Activated naive CD4-positive, alpha-beta T cell treated with anti-CD3 and anti-CD28 coated beads for 36 hours (primary cell): ENCODE measurements at regions of chr3 and their contacts with region 1.

Region 1: DNA sequence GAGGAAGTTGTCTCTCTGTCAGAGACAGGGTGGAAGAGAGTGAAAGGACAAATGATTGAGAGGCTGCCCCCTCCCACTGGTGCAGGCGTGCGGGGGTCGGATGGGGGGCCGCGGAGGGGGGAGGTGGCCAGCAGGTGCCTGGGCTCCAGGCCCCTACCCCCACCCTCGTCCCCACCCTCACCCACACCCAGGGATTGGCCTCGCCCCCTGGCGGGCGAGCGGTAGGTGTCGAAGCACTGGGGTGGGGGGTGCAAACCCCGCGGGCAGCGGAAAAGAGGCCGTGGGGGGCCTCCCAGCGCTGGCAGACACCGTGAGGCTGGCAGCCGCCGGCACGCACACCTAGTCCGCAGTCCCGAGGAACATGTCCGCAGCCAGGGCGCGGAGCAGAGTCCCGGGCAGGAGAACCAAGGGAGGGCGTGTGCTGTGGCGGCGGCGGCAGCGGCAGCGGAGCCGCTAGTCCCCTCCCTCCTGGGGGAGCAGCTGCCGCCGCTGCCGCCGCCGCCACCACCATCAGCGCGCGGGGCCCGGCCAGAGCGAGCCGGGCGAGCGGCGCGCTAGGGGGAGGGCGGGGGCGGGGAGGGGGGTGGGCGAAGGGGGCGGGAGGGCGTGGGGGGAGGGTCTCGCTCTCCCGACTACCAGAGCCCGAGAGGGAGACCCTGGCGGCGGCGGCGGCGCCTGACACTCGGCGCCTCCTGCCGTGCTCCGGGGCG is at the start of gene KAT2B:
- DNase-seq: peak; percentile 87
- H3K4me3 Mint-ChIP-seq: peak within 1 kb of the TSS; percentile 95
- H3K27ac Mint-ChIP-seq: peak within 1 kb of the TSS; percentile 92
- H3K4me1 Mint-ChIP-seq: peaks cover 42% of the 10 kb centered on the region
- H3K27me3 Mint-ChIP-seq: no peaks in the 10 kb centered on the region
- total RNA-seq, gene KAT2B: 9.4 to 11.5 TPM

Region 2: DNA sequence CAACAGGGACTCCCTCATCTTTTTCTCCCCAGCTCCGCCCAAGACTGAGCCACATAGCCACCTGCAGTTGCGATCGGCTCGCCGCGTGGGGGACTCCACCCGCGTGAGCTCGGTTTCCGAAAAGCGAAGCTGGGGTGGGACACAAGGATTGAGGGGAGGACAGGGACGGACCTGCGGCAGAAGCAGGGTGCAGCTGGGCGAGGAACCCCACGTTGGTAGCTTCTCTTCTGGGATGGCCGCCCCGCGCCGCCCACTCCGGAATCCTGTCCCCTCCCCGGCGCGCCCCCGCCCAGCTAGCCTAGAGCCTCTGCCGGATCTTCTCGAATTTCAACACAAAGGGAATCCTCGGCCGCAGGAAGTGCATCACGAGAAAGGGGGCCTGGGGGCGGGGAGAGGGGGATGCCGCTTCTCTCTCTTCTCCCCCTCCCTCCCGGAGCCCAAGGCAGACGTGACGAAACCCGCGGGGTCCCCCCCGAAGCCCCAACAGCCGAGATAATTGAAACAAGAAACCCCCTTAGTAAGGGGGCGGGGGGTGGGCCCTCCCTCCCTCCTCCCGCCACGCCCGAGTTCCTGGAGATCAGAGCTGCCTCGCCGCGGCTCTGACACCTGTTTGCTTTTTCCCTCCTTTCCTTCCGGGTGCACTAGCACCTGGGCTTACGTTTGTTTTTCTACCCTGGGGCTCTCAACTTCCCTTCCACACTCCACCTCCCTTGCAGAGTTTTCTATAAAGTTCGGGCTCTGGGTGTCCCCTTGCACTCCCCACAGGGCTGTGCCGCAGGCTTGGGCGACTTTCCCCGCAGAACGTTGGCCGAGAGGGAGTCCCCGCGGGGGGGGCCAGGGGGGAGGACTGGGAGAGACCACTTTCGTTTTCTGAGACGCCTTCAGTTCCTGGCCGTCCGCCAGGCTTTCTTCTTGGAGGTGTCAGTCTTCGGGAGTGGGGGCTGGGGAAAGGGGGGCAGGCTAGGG is 893.0 kb before region 1 on chr3:
- CTCF ChIA-PET with region 1: no interaction called
- intact Hi-C with region 1: loop called (anchors 2 kb)
- DNase-seq: peak; percentile 78
- H3K4me3 Mint-ChIP-seq: peak overlapping the region; percentile 81
- H3K27ac Mint-ChIP-seq: peak overlapping the region; percentile 54
- H3K4me1 Mint-ChIP-seq: peaks cover 15% of the 10 kb centered on the region
- H3K27me3 Mint-ChIP-seq: peaks cover 34% of the 10 kb centered on the region

Region 3: GRCh38 chr3:19885468-19885867 is 154.5 kb before region 1 on chr3:
- CTCF ChIA-PET with region 1: interaction called, 3 read pairs
- intact Hi-C with region 1: loop called (anchors 1 kb)
- DNase-seq: no peak
- H3K4me3 Mint-ChIP-seq: no peak overlapping the region
- H3K27ac Mint-ChIP-seq: no peak overlapping the region
- H3K4me1 Mint-ChIP-seq: no peaks in the 10 kb centered on the region
- H3K27me3 Mint-ChIP-seq: no peaks in the 10 kb centered on the region

Region 4: DNA sequence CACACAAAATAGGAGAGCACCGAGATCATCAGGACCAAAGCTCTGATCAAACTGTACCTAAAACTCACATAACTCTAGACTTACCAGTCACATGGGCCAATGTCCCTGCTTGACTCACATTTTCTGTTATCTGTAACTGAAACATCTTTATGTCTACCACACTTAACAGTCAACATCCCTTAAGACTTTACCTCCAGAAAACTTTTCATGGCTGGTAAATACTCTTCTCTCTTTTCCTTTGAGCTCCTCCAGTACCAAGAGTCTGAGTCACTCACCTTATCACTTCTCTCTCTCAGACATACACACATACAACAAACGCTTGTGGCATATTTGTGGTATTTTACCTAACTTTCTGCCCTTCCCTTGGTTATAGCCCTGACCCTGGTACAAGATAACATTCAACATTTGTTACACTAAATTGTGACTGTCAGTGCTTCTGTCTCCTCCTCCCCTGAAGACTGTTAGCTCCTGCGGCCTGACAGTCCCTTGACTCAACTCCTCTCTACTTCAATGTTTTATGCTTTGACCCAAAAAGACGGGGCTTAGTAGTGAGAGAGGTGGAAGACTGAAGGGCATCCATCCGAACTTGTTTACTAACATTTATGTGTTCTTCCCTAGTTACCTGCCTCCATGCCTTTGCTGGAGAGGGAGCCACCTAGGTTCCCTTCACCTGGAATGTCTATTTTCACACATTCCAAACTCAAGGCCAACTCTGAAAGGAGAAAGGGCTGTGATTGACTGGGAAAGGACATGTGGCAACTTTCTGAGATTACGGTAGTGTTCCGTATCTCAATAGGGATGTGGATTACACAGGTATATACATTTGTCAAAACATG is 102.2 kb before region 1 on chr3:
- CTCF ChIA-PET with region 1: no interaction called
- intact Hi-C with region 1: loop called (anchors 2 kb)
- DNase-seq: peak; percentile 31
- H3K4me3 Mint-ChIP-seq: no peak overlapping the region
- H3K27ac Mint-ChIP-seq: peak overlapping the region; percentile 63
- H3K4me1 Mint-ChIP-seq: peaks cover 13% of the 10 kb centered on the region
- H3K27me3 Mint-ChIP-seq: peaks cover 6% of the 10 kb centered on the region

Region 5: GRCh38 chr3:20054549-20054987 is 14.6 kb after region 1 on chr3:
- CTCF ChIA-PET with region 1: interaction called, 9 read pairs
- intact Hi-C with region 1: loop called (anchors 1 kb)
- DNase-seq: peak; percentile 84
- H3K4me3 Mint-ChIP-seq: no peak overlapping the region
- H3K27ac Mint-ChIP-seq: no peak overlapping the region
- H3K4me1 Mint-ChIP-seq: peaks cover 23% of the 10 kb centered on the region
- H3K27me3 Mint-ChIP-seq: no peaks in the 10 kb centered on the region

Region 6: GRCh38 chr3:20104167-20104661 is 64.3 kb after region 1 on chr3:
- CTCF ChIA-PET with region 1: interaction called, 4 read pairs
- intact Hi-C with region 1: loop called (anchors 2 kb)
- DNase-seq: peak; percentile 29
- H3K4me3 Mint-ChIP-seq: no peak overlapping the region
- H3K27ac Mint-ChIP-seq: no peak overlapping the region
- H3K4me1 Mint-ChIP-seq: peaks cover 22% of the 10 kb centered on the region
- H3K27me3 Mint-ChIP-seq: no peaks in the 10 kb centered on the region

Region 7: DNA sequence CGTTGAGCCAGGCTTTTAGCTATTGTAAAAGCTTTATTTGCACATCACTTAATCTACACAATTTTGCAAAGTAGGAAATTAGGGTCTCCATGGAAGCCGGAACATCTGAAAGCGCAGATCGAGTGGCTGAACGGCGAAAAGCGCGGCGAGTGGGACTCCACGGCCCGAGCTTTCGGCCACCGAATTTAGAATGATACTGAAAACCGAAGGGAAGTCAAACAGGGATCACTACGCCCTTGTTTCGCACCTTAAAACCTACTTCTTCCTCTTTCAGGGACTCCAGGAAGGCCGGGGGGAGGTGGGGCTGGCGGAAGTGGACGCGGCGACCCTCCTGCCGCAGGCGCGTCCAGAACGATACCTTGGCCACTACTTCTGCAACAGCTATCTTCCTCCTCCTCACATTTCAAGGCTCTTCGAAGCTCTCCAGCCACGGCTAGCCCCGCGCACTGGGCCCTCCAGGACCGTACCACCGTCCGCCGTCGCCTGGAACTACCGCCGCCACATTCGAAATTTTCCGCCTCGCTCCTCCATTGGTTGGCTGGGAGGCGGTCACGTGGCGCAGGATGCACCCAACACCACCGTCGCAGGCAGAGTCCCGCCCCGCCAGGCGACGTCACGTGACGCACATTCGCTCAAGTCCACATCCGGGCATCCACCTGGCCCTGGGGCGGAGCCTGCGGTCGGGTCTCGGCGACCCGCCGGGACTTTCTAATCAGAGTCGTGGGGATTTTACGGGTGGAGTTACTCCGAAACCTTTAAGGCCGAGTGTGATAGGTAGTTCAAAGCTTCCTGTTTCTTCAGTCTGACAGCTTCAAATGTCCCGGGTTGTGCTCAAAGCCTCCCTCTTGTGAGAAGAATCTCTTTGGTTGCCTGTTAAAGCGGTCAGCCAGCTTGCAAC is 146.0 kb after region 1 on chr3 and contains the start of gene SGO1:
- CTCF ChIA-PET with region 1: interaction called, 4 read pairs
- intact Hi-C with region 1: loop called (anchors 1 kb)
- DNase-seq: peak; percentile 99
- H3K4me3 Mint-ChIP-seq: no peak within 1 kb of the TSS
- H3K27ac Mint-ChIP-seq: no peak within 1 kb of the TSS
- H3K4me1 Mint-ChIP-seq: peaks cover 2% of the 10 kb centered on the region
- H3K27me3 Mint-ChIP-seq: no peaks in the 10 kb centered on the region
- total RNA-seq, gene SGO1: 36.2 to 37.5 TPM